ENCODE measurements at regions of chr9 and their contacts with region 1.

Region 1: DNA sequence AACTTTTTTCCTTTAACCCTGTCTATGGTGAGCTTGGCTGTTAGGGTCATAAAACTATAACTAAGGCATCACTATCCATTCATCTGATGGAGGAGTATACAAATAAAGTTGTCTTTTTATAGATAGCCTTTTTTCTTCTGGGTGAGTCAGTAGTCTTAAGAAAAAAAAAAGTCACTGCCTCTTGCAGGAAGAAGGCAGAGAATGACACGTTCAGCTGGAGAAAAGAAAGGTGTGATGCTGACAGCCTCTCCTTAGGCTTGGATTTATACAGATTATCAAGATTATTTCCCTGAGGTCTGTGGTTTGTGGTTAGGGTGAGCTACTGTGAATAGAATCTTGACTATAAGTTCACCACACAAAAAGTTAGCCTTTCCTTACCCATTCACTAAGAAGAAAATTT is 23.0 kb downstream of the EPB41L4B start:
- DNase-seq: no peak
- H3K27ac ChIP-seq: peak overlapping the region; percentile 44; the same call in 1 of the 2 replicates
- CTCF ChIP-seq: no peak

Region 2: GRCh38 chr9:109182940-109183798 is 114.7 kb before region 1 on chr9:
- CTCF ChIA-PET with region 1: interaction called, 13 read pairs
- POLR2A ChIA-PET with region 1: no interaction called
- DNase-seq: peak; percentile 64
- H3K27ac ChIP-seq: no peak overlapping the region
- CTCF ChIP-seq: peak; percentile 60

Region 3: DNA sequence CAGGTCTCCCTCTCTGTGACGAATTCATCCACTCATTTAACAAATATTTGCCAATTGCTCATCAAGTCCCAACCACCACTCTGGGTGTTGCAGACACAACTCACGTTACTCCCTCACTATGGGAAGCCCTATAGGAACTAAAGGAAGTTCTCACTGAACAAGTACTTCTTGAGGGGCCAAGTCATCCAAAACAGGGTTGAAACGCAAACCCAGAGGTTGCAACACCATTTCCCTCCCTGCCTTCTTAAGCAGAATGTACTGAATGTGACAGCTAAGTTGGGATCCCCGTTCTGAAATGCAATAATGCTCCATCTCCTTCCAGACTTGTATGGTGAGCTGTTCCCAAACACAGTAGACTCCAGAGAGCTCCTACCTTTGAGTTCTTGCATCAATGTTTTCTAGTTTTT is 11.3 kb before region 1 on chr9:
- CTCF ChIA-PET with region 1: no interaction called
- POLR2A ChIA-PET with region 1: no interaction called
- DNase-seq: peak; percentile 87
- H3K27ac ChIP-seq: no peak overlapping the region
- CTCF ChIP-seq: no peak

Region 4: GRCh38 chr9:109351032-109351431 is 53.1 kb after region 1 on chr9:
- CTCF ChIA-PET with region 1: no interaction called
- POLR2A ChIA-PET with region 1: no interaction called
- DNase-seq: no peak
- H3K27ac ChIP-seq: no peak overlapping the region
- CTCF ChIP-seq: no peak

Measured in RWPE1 (cell line).